ENCODE measurements at regions of chr17 and their contacts with region 1.

Region 1: GRCh38 chr17:46212634-46213435 is 19.6 kb upstream of the KANSL1 start:
- DNase-seq: peak; percentile 67 to 88 (median 76)
- H3K4me3 ChIP-seq: no peak overlapping the region
- H3K27ac ChIP-seq: peak overlapping the region in 1 of 5 donors; percentile 48
- H3K4me1 ChIP-seq: peaks cover 12 to 19% of the 10 kb centered on the region in 2 donors
- H3K27me3 ChIP-seq: no peaks in the 10 kb centered on the region
- CTCF ChIP-seq: peak; percentile 60 to 91 (median 88)
- POLR2A ChIP-seq: no peak

Region 2: GRCh38 chr17:46002311-46002972 is 210.4 kb before region 1 on chr17:
- intact Hi-C with region 1: loop called (anchors 5 kb)
- DNase-seq: peak; percentile 46 to 91 (median 79)
- H3K4me3 ChIP-seq: no peak overlapping the region
- H3K27ac ChIP-seq: no peak overlapping the region
- H3K4me1 ChIP-seq: peaks cover 0 to 14% of the 10 kb centered on the region in 2 donors
- H3K27me3 ChIP-seq: no peaks in the 10 kb centered on the region
- CTCF ChIP-seq: peak; percentile 91 to 98 (median 94)
- POLR2A ChIP-seq: no peak

Region 3: DNA sequence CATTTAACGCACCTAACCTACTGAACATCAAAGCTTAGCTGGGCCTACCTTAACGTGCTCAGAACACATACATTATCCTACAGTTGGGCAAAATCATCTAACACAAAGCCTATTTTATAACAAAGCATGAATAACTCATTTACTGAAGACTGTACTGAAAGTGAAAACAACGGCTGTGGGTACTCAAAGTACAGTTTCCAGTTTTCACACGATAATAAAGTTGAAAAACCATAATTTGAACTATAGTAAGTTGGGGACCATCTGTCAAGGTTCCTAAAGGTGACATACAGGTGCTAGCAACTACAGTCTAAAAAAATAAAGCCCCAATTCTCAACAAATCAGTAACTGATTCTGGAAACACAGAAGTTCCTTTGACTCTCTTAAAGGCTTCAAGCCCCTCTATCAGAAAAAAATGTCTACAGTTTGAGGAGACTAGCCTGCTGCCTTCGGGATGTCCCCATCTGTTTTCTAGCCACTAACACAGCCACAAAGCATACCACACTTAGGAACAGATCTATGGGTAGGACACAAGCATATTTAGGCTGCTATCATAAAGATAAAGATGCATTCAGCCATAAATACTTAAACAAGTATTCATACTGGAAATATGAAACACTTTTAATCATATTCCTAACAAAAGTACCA is 90.9 kb before region 1 on chr17:
- intact Hi-C with region 1: no loop called
- DNase-seq: no peak
- H3K4me3 ChIP-seq: no peak overlapping the region
- H3K27ac ChIP-seq: no peak overlapping the region
- H3K4me1 ChIP-seq: peaks cover 13 to 75% of the 10 kb centered on the region in 2 donors
- H3K27me3 ChIP-seq: no peaks in the 10 kb centered on the region
- CTCF ChIP-seq: no peak
- POLR2A ChIP-seq: no peak

Measured in adrenal gland (tissue), 19 donors.